Right ventricle myocardium superior (tissue), 1 donor: ENCODE measurements at regions of chr6 and their contacts with region 1.

Region 1: GRCh38 chr6:118207947-118208346 is 300.9 kb downstream of the SLC35F1 start:
- DNase-seq: no peak
- ATAC-seq: no peak

Region 2: DNA sequence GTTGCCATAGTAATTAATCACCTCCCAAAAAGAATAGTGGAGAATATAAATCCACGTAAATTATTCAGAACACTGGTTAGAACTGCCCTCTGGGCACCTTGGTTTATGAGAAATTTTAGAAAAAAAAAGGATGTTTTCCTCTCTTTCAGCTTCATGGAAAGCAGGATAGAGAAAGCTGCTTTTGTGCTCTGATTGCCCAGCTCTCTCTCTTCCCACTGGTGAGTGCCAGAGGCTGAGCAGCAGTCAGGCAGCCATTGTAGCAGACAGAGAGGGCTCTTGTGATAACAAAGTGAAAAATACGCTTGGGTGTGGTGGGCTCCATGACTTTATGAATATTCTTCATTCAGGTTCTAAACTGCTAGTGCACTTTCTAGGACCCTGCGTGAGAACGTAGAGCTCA is 274.5 kb before region 1 on chr6:
- intact Hi-C with region 1: no loop called
- DNase-seq: no peak
- ATAC-seq: no peak

Region 3: GRCh38 chr6:118061666-118062065 is 146.3 kb before region 1 on chr6:
- intact Hi-C with region 1: no loop called
- DNase-seq: no peak
- ATAC-seq: no peak

Region 4: DNA sequence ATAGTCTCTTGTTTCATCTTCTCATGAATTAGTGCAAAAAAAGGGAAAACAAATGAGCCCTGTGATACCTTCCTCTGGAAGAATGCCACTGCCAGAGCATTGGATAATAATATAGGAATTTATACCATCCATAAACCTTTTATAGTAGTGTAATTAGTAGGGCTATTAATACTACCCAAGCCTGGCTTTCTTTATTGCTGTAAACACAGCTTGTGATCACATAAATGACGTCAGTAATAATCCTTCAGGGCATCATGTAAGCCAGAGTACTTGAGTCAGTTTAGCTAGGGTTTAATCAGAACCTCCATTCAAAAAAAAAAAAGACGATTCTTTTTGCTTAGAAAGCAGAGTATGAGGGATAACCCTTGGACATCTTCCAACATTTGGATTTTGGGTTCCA is 36.1 kb before region 1 on chr6:
- intact Hi-C with region 1: loop called (anchors 2 kb)
- DNase-seq: no peak
- ATAC-seq: no peak